ENCODE measurements at regions of chr6 and their contacts with region 1.

Region 1: DNA sequence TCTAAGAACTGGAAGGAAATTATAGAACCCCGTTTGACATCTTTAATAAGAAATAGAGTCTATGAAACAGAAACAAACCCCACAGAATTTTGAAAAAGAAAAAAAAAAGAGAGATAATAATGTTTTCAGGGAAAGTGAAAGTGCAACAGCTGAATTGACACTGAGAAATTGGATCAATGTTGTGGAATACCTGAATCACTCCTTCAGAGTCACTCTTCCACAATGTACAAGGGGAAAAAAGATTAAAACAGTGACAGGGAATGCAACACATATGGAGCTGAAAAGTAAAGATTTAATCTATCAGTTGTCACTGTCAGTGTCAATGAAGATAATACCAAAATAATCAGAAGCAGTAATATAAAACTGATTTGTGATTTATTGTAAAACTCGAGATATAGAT is 520.8 kb upstream of the HS3ST5 start:
- DNase-seq: no peak
- ATAC-seq: no peak
- H3K4me3 ChIP-seq: no peak overlapping the region
- H3K27ac ChIP-seq: no peak overlapping the region
- H3K4me1 ChIP-seq: no peaks in the 10 kb centered on the region
- H3K27me3 ChIP-seq: peaks cover 24% of the 10 kb centered on the region; the same call in 1 of the 2 replicates
- CTCF ChIP-seq: no peak

Region 2: GRCh38 chr6:114556846-114557488 is 306.6 kb before region 1 on chr6:
- CTCF ChIA-PET with region 1: interaction called, 10 read pairs
- POLR2A ChIA-PET with region 1: no interaction called
- intact Hi-C with region 1: no loop called
- DNase-seq: no peak
- ATAC-seq: no peak
- H3K4me3 ChIP-seq: no peak overlapping the region
- H3K27ac ChIP-seq: no peak overlapping the region
- H3K4me1 ChIP-seq: no peaks in the 10 kb centered on the region
- H3K27me3 ChIP-seq: no peaks in the 10 kb centered on the region
- CTCF ChIP-seq: no peak

Region 3: DNA sequence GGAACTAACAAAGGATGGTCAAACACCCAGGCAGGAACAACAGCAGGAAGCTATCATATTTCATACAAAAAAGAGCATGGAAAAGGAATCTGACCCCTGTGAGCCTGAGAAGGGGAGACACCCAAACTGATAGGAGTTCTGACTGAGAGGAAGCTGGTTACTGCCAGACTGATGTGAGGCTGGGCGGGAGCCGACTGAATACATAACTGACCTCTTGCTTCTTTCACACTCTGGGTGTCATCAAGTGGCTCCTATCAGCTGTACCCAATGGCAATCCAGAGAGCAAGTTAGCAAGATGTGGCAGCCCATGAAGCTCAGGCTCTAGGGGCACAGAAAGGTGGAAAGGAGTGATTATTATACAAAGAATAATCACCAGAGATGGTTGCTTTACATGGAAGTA is 274.3 kb after region 1 on chr6:
- CTCF ChIA-PET with region 1: no interaction called
- POLR2A ChIA-PET with region 1: no interaction called
- intact Hi-C with region 1: no loop called
- DNase-seq: no peak
- ATAC-seq: no peak
- H3K4me3 ChIP-seq: no peak overlapping the region
- H3K27ac ChIP-seq: no peak overlapping the region
- H3K4me1 ChIP-seq: no peaks in the 10 kb centered on the region
- H3K27me3 ChIP-seq: no peaks in the 10 kb centered on the region
- CTCF ChIP-seq: no peak